Activated naive CD8-positive, alpha-beta T cell treated with anti-CD3 and anti-CD28 coated beads, Interleukin-2, amount 10 ng/mL, durations not matched to agents 7 days and 5 days (primary cell): ENCODE measurements at regions of chr3 and their contacts with region 1.

Region 1: DNA sequence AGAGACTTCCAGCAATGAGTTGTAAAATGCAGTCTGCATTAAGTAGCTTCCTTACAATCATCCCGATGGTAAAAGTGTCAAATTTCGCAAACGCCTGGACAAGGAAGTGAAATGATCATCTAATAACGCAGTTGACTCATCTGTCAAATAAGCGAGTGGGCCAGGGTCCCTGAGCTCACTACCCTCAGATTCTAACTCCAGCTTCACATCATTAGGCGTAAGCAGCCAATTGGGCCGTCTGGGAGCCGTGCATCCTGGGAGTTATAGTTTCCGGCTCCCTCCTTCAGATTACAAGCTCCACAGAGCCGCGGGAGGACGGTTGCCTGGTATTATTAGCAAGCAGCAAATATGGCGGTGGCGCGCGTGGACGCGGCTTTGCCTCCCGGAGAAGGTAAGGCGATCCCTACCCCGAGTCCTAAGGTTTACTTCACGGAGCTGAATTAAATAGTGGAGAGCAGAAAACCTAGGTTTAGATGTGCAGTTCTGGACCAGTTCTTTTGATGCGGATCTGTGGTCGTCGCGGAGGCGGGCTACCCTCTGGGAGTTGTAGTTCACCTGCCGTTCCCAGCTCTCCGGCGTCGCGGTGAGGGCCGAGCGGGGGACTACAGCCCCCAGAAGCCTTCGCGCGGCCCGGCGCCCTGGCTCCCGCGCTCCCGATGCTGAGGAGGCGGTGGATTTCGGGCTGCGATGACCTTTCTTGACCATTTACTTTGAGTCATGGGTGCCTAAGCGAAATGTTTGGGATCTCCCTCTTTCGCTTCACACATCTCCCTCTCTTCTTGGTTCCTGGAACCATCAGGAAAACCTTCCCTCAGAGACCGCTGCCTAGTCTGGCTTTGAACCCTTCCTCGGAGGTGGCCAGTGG is at the start of gene CEP97:
- DNase-seq: peak; percentile 89
- ATAC-seq: peak; percentile 94
- H3K4me3 Mint-ChIP-seq: peak within 1 kb of the TSS; percentile 96
- H3K27ac Mint-ChIP-seq: peak within 1 kb of the TSS; percentile 94
- H3K4me1 Mint-ChIP-seq: peaks cover 29% of the 10 kb centered on the region
- H3K27me3 Mint-ChIP-seq: no peaks in the 10 kb centered on the region
- total RNA-seq, gene CEP97: 21.5 TPM

Region 2: GRCh38 chr3:101676765-101677435 is 47.7 kb before region 1 on chr3 and contains the start of gene ZBTB11:
- POLR2A ChIA-PET with region 1: interaction called, 12 read pairs
- DNase-seq: peak; percentile 99
- ATAC-seq: peak; percentile 74
- H3K4me3 Mint-ChIP-seq: peak within 1 kb of the TSS; percentile 84
- H3K27ac Mint-ChIP-seq: peak within 1 kb of the TSS; percentile 96
- H3K4me1 Mint-ChIP-seq: peaks cover 32% of the 10 kb centered on the region
- H3K27me3 Mint-ChIP-seq: no peaks in the 10 kb centered on the region
- total RNA-seq, gene ZBTB11: 35.0 to 35.3 TPM

Region 3: DNA sequence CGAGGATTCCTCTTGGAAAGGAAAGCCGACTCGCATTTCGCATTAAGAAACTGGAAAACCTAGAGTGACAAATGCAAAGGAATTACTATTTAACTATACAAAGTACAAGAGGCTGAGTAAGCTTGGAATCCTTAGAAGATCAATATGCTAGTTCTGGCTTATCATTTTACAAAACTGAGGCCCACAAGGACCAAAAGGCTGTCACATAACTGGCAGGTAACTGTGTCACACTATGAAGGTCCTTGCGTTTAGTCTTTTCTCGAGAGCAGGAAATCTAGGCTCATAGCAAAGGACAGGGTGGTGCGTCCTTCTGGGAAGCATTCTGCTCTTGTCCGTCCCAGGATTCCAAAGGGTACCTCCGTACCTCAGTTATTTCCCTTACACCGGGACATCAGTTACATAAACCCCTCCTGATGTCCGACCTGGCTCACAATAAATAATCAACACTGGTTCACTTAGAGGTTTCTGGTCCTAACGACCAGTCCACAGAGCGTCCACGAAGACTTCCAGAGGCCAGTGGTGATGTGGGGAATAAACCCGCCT is 38.6 kb before region 1 on chr3:
- POLR2A ChIA-PET with region 1: interaction called, 36 read pairs
- DNase-seq: no peak
- ATAC-seq: peak; percentile 2
- H3K4me3 Mint-ChIP-seq: peak overlapping the region; percentile 100
- H3K27ac Mint-ChIP-seq: peak overlapping the region; percentile 99
- H3K4me1 Mint-ChIP-seq: peaks cover 26% of the 10 kb centered on the region
- H3K27me3 Mint-ChIP-seq: no peaks in the 10 kb centered on the region

Region 4: DNA sequence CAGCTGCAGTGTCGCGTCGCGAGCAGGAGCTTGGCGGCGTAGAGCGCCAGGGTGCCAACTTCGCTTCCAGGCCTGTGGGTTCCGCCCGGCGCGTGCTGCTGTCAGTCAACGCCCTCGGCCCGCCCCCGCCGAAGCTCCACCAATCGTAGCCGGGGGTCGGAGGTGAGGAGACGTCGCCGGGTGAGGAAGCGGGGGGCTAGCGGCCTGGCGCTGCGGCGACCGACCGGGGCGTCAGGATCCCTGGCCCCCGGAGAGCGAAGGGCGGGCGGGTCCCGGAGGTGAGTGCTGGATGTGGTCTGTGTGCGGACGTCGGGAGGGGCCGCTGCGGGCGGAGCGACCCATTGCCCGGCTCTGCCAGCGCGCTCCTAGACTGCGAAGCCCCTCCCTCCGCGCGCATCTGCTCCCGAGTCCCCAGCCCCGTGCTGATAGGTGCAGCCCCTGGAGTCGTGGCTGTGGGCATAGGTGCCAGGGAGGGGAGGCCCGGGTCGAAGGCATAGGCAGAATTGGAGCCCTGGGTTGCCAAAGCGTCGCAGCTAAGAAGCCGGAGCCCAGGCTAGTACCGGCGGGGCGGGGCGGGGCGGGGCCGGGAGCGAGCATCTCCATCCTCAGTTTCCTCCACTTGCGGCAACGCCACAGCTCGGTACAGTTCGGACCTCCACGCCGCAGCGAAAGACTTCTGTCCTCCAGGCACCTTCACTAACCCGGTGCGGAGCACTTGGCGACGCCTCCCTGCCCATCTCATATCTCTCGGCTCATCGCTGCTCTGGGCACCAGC is 54.7 kb after region 1 on chr3 and contains the start of gene NXPE3:
- POLR2A ChIA-PET with region 1: interaction called, 26 read pairs
- DNase-seq: peak; percentile 96
- ATAC-seq: peak; percentile 92
- H3K4me3 Mint-ChIP-seq: peak within 1 kb of the TSS; percentile 98
- H3K27ac Mint-ChIP-seq: peak within 1 kb of the TSS; percentile 96
- H3K4me1 Mint-ChIP-seq: peaks cover 36% of the 10 kb centered on the region
- H3K27me3 Mint-ChIP-seq: no peaks in the 10 kb centered on the region
- total RNA-seq, gene NXPE3: 29.8 to 30.7 TPM